ENCODE measurements at regions of chr3 and their contacts with region 1.

Region 1: DNA sequence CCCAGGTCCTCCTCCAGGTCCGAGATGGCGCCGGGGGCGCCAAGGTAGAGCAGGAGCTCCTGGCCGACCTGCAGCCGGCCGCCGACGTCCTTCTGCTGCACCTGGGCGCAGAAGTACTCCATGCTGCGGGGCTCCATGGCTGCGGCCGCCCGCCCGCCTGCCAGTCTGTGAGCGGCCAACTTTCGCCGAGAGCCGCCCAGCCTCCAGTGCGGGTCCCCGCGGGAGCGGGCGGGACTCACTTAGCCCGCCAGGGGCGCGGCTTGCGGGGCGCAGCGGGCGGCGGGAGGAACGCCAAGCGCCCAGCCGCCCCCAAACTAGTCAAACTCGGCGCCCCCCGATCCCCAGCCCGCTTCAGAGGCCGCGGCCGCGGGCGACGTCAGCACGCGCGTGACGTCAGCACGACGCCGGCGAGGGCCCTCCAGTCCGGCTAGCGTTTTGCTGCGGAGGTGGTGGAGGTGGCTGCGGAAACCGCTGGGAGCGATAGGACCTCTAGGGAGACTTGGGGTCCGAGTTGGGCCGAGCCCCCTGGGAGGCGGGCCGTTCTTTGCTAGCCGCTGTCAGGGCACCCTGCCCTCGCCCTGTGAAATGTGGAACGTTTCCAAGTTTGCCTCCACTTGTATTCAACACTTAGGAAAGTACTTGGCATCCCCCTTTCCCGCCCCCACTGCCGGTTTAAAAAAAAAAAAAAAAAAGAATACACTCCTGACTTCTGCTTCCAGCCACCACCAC is at the start of gene CLASP2:
- DNase-seq: peak; percentile 86
- ATAC-seq: peak; percentile 95
- H3K4me3 ChIP-seq: peak within 1 kb of the TSS; percentile 99
- H3K27ac ChIP-seq: peak within 1 kb of the TSS; percentile 91
- H3K4me1 ChIP-seq: peaks cover 4% of the 10 kb centered on the region
- H3K27me3 ChIP-seq: no peaks in the 10 kb centered on the region
- CTCF ChIP-seq: no peak
- POLR2A ChIP-seq: peak; percentile 69
- RAD21 ChIP-seq: no peak
- total RNA-seq, gene CLASP2: 42.5 and 49.1 TPM in 2 replicates

Region 2: DNA sequence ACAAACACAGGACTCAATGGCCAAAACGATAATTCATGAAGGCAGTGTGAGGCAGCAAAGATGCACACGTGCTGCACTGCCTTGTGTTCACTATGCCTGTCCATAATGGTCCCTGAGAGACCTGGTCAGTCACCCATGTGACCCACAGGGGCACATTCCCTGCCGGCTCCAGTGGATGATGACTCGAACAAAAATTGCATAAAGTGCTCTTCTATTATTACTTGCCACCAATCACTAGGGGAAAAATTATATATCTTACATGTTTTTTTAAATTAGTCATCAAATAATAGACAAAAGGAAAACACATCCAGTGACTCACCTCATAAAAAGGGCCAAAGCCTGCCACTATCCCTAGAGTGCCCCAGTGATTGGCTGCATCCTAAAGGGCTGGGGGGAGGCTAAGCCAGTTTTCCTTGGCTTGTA is 325.3 kb before region 1 on chr3:
- CTCF ChIA-PET with region 1: no interaction called
- POLR2A ChIA-PET with region 1: no interaction called
- dilution Hi-C with region 1: no loop called
- in situ Hi-C with region 1: loop called (anchors 10 kb)
- intact Hi-C with region 1: no loop called
- DNase-seq: peak; percentile 93
- ATAC-seq: peak; percentile 96
- H3K4me3 ChIP-seq: no peak overlapping the region
- H3K27ac ChIP-seq: peak overlapping the region; percentile 52; the same call in 1 of the 2 replicates
- H3K4me1 ChIP-seq: peaks cover 10% of the 10 kb centered on the region
- H3K27me3 ChIP-seq: no peaks in the 10 kb centered on the region
- CTCF ChIP-seq: no peak
- POLR2A ChIP-seq: no peak
- RAD21 ChIP-seq: no peak

Region 3: DNA sequence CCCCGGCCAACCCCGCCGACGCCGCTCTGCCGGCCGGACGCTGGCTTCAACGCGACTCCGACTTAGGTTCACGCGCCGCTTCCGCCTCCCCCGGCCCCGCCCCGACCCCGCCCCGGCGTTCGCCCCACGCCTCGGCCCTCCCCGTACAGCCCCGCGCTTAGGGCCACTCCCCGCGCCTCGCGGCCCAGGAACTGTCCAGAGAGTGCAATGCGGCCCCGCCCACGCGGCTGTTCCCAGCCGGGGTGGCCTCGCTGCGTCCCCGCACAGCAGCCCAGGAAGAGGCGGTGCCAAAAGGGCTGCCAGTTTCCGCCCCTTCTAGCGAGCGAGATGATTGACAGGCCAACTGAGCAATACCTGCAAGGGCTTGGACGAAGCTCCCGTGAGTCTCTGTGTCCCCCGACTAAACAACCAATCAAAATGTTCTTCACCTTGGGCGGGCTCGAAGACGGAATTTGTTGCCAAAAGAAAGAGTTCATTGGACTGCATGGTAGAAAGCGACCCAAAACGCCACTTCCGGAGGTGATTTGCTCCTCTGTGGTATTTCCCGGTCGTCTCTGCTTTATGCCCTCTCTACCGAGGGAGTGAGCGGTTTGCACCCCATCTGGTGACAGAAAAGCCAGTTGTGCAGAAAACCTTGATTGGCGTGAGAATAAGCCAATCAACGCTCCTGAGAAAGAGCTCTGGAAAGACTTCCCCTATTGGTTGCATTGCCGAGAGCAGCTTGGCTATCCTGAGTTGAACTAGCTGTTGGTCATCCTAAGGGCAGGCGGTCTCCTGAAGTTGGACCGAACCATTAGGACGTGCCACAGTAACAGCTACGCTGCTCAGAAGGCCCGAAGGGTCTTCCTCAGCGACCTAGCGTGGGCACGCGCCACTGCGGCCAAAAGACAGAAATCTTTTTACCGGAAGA is 277.5 kb before region 1 on chr3 and contains the start of gene UBP1:
- CTCF ChIA-PET with region 1: no interaction called
- POLR2A ChIA-PET with region 1: no interaction called
- dilution Hi-C with region 1: no loop called
- in situ Hi-C with region 1: no loop called
- intact Hi-C with region 1: loop called (anchors 5 kb)
- DNase-seq: peak; percentile 100
- ATAC-seq: peak; percentile 91
- H3K4me3 ChIP-seq: peak within 1 kb of the TSS; percentile 73
- H3K27ac ChIP-seq: peak within 1 kb of the TSS; percentile 92
- H3K4me1 ChIP-seq: peaks cover 2% of the 10 kb centered on the region
- H3K27me3 ChIP-seq: no peaks in the 10 kb centered on the region
- CTCF ChIP-seq: 0 out of 2 replicates have a peak, but pooled peaks have one; percentile 9
- POLR2A ChIP-seq: peak; percentile 91
- RAD21 ChIP-seq: no peak
- total RNA-seq, gene UBP1: 56.3 and 68.6 TPM in 2 replicates

Region 4: DNA sequence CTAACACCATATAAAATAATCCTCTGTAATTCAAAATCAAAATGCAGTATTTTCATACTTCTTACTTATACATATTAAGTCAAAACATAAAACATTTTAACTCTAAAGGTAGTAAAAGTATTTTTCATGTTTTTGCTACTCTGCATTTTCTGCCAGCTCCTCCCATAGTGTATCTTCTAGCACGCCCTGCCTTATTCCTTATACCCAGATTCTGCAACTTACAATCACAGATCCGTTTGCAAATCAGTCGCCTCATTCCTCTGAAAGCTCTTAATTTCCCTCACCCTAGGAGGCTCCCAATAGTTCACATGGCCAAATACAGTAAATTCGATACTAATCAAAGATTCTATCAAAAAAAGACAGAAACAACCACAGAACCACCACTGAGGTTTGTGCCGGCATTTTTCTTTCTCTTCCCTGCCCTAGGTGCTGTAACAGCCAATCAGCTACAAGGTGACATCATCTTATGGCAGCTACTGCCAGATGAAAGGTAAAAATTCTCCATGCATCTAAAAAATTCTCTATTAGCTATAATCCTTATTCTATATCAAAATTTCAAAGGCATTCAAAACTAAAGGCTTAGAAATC is 72.9 kb before region 1 on chr3:
- CTCF ChIA-PET with region 1: no interaction called
- POLR2A ChIA-PET with region 1: no interaction called
- dilution Hi-C with region 1: no loop called
- in situ Hi-C with region 1: no loop called
- intact Hi-C with region 1: no loop called
- DNase-seq: peak; percentile 6
- ATAC-seq: 0 out of 2 replicates have a peak, but pooled peaks have one; percentile 40
- H3K4me3 ChIP-seq: no peak overlapping the region
- H3K27ac ChIP-seq: no peak overlapping the region
- H3K4me1 ChIP-seq: peaks cover 2% of the 10 kb centered on the region; the same call in 1 of the 2 replicates
- H3K27me3 ChIP-seq: no peaks in the 10 kb centered on the region
- CTCF ChIP-seq: no peak
- POLR2A ChIP-seq: no peak
- RAD21 ChIP-seq: no peak

Region 5: GRCh38 chr3:33658991-33659848 is 58.8 kb before region 1 on chr3:
- CTCF ChIA-PET with region 1: interaction called, 4 read pairs
- POLR2A ChIA-PET with region 1: no interaction called
- dilution Hi-C with region 1: no loop called
- in situ Hi-C with region 1: no loop called
- intact Hi-C with region 1: loop called (anchors 5 kb)
- DNase-seq: peak; percentile 88
- ATAC-seq: peak; percentile 94
- H3K4me3 ChIP-seq: peak overlapping the region; percentile 31
- H3K27ac ChIP-seq: peak overlapping the region; percentile 45
- H3K4me1 ChIP-seq: peaks cover 4% of the 10 kb centered on the region
- H3K27me3 ChIP-seq: no peaks in the 10 kb centered on the region
- CTCF ChIP-seq: no peak
- POLR2A ChIP-seq: no peak
- RAD21 ChIP-seq: no peak